ENCODE measurements at regions of chr5 and their contacts with region 1.

Region 1: DNA sequence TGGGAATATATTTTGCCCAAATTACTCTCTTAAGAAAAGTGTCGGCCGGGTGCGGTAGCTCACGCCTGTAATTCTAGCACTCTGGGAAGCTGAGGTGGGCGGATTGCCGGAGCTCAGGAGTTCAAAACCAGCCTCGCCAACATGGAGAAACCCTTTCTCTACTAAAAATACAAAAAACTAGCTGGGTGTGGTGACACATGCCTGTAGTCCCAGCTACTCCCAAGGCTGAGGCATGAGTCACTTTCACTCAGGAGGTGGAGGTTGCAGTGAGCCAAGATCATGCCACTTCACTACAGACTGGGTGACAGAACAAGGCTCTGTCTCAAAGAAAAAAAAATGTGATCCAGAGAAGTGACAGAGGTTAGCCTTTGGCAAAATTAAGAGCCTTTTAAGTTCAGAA is 26.4 kb upstream of the TMEM171 start:
- DNase-seq: no peak

Region 2: DNA sequence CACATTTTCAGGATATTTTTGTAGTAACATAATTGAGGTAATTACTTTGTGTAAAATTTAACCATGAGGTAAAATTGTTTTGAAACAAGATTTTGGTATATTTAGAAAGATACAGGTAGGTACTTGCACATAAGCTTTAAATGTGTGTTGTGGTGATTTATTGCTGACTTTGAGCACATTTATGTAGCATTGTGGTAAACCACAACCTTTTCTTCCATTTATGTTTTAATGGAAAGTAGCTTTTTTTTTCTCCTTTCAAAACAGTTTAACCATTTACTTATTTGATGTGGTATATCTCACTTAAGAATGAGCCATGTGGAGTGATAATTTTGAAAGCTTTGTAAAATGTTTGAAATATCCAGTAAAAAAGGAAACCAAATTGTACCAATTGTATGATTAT is 102.5 kb before region 1 on chr5:
- intact Hi-C with region 1: no loop called
- DNase-seq: no peak

Region 3: DNA sequence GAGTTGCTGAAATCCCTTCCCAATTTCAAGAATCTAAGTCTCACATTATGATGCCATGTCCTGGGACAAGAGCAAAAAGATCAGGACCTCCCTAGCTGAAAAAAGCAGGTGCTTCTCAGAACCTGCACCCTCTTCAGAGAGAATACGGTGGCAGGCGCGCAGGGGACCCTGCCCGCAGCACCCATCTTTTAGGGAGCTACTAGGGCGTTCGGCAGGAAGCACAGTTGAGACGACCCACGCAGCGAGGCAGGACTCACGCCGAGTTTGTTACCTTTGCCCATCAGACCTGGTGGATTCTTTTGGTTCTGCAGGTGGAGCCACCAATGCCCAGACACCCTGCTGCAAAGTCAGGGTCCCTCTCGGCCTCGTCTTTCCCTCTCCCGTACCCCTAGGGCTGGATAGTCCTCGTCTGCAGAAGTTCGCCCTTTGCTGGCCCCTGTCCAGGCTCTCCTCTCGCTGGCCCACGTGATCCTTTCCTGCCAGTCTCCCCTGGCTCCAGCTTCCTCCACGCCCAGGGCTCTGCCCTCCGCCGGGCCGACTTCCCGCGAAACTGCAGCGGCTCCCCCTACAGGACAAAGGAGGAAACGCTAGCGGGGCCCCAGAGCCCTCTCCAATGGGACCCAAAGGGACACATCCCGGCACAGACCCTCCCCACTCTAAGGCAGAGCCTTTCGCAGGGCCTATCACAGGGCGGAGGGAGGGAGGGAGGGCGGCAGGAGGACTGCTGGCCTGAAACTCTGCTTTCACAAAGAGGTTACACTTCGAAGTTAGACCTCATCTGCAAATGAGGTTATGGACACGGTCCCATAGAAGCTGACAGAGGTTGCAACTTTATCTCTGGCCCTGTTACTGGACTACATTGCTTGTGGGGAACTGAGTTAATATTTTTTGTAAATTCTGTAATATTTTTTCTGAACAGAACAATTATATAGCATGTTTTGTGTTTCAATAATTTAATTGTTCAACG is 107.9 kb after region 1 on chr5:
- intact Hi-C with region 1: loop called in 1 of 2 experiments (anchors 10 kb)
- DNase-seq: peak; percentile 91

Region 4: GRCh38 chr5:74570250-74570649 is 1476.3 kb after region 1 on chr5:
- intact Hi-C with region 1: loop called in 1 of 2 experiments (anchors 5 kb)
- DNase-seq: no peak

Measured in posterior vena cava (tissue), 2 donors.